Gastrocnemius medialis (tissue), 4 donors: ENCODE measurements at regions of chr11 and their contacts with region 1.

Region 1: GRCh38 chr11:69918938-69919650 is 99.9 kb upstream of the FGF3 start:
- DNase-seq: peak; percentile 21 to 33
- ATAC-seq: peak; percentile 19 to 53
- H3K4me3 ChIP-seq: no peak overlapping the region
- H3K27ac ChIP-seq: peak overlapping the region; percentile 46 to 65 (median 62)
- H3K4me1 ChIP-seq: peaks cover 11 to 16% of the 10 kb centered on the region in 2 donors
- H3K27me3 ChIP-seq: peaks cover 0 to 14% (median 0%) of the 10 kb centered on the region in 3 donors
- CTCF ChIP-seq: peak; percentile 77 to 91 (median 84)
- POLR2A ChIP-seq: no peak

Region 2: GRCh38 chr11:69750108-69750850 is 168.8 kb before region 1 on chr11:
- in situ Hi-C with region 1: no loop called
- intact Hi-C with region 1: no loop called
- DNase-seq: no peak
- ATAC-seq: no peak
- H3K4me3 ChIP-seq: no peak overlapping the region
- H3K27ac ChIP-seq: no peak overlapping the region
- H3K4me1 ChIP-seq: no peaks in the 10 kb centered on the region
- H3K27me3 ChIP-seq: peaks cover 3 to 10% (median 9%) of the 10 kb centered on the region in 3 donors
- CTCF ChIP-seq: no peak
- POLR2A ChIP-seq: no peak

Region 3: DNA sequence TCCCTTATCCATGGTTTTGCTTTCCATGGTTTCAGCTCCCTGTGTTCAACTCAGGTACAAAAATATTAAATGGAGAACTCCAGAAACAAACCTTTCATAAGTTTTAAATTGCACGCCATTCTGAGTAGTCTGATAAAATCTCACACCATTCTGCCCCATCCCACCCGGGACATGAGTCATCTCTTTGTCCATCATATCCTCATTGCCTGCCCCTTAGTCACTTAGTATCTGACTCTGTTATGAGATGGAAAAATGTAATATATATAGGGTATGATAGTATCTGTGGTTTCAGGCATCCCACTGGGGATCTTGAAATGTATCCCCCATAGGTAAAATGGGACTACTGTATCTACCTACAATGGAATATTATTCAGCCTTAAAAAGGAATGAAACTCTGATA is 64.4 kb before region 1 on chr11:
- in situ Hi-C with region 1: no loop called
- intact Hi-C with region 1: no loop called
- DNase-seq: no peak
- ATAC-seq: no peak
- H3K4me3 ChIP-seq: no peak overlapping the region
- H3K27ac ChIP-seq: no peak overlapping the region
- H3K4me1 ChIP-seq: no peaks in the 10 kb centered on the region
- H3K27me3 ChIP-seq: peaks cover 0 to 10% (median 9%) of the 10 kb centered on the region in 3 donors
- CTCF ChIP-seq: no peak
- POLR2A ChIP-seq: no peak

Region 4: DNA sequence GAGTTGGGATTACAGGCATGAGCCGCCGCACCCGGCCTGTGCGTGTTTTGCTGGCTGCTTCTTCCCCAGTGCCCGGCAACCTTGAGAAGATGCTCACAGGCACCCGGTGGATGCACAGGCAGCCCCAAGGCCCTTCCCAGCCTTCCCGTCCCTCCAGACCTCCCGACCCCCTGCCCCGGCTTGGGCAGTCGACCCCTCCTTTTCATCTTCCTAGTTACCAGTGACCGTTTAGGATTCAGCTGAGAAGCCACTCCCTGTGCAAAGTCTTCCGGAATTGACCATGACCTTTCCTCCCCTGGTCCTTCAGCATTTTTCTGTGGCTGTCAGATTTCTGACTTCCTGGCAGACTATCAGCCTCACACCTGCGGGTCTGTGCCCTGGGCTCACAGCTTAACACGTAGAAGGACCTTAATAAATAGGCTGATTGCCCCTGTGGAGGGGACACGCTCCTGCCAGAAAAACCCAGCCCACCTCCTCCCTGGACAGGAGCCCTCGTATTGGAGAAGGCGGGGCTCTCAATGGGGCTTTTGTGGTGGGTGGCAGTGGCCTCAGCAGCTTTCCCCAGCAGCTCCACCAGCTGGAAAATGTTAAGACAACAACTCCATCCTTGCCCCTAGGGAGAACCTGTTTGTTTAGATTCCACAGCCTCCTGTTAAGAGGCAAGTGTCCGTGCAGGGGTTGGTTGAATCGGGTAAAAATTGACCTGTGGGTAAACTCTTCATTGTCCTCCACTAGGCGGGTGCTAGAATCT is 148.7 kb after region 1 on chr11:
- in situ Hi-C with region 1: no loop called
- intact Hi-C with region 1: no loop called
- DNase-seq: no peak
- ATAC-seq: no peak
- H3K4me3 ChIP-seq: no peak overlapping the region
- H3K27ac ChIP-seq: no peak overlapping the region
- H3K4me1 ChIP-seq: peaks cover 0 to 1% of the 10 kb centered on the region in 2 donors
- H3K27me3 ChIP-seq: peaks cover 8 to 28% (median 13%) of the 10 kb centered on the region in 3 donors
- CTCF ChIP-seq: no peak
- POLR2A ChIP-seq: no peak

Region 5: GRCh38 chr11:70090961-70091381 is 171.9 kb after region 1 on chr11:
- in situ Hi-C with region 1: no loop called
- intact Hi-C with region 1: loop called (anchors 10 kb)
- DNase-seq: no peak
- ATAC-seq: peak; percentile 43 to 56
- H3K4me3 ChIP-seq: no peak overlapping the region
- H3K27ac ChIP-seq: peak overlapping the region; percentile 41 to 60 (median 50)
- H3K4me1 ChIP-seq: peaks cover 9 to 10% of the 10 kb centered on the region in 2 donors
- H3K27me3 ChIP-seq: no peaks in the 10 kb centered on the region
- CTCF ChIP-seq: no peak
- POLR2A ChIP-seq: no peak